Panc1 (cell line): ENCODE measurements at regions of chr7 and their contacts with region 1.

Region 1: DNA sequence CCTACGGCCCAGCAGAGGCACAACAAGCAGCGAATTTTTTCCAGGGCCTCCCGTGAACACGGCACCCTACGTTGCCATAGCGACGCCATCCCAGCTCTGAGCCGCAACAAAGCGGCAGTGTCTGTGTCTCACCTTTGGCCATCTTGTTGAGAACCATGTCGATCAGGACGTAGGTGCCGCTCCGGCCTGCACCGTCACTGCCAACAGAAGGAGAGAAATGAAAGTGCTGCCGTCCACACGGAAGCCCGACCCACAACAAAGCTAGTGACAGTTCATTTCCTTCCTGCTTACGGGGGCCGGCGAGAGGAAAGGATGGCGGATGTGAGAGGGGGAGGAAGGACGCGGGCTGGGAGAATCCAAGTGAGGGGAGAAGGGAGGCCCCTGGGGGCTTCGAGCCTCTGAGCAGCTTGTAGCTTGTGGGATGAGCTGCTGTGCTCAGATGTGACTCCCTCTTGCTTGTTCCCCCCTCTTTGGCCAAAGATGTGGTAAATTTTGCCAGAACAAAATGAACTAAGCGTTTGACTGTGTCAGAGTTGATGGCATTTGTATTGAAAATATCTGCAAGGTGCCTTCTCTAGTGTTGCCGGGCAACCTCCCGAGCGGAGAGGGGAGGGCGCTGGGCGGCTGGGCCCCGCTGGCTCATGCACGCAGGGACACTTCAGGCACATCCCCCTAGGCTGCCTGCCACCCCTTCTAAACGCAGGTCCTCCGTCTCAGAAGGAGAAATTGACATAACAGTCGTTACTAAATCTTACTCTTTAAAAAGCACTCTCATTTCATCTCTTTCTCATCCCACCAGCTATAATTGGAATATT is 232.2 kb downstream of the DNAJB6 start:
- DNase-seq: no peak
- ATAC-seq: no peak
- H3K4me3 ChIP-seq: no peak overlapping the region; a peak in 1 of 4 replicates
- H3K27ac ChIP-seq: no peak overlapping the region
- H3K4me1 ChIP-seq: no peaks in the 10 kb centered on the region
- H3K27me3 ChIP-seq: no peaks in the 10 kb centered on the region
- CTCF ChIP-seq: no peak

Region 2: GRCh38 chr7:157555313-157555712 is 13.7 kb before region 1 on chr7:
- CTCF ChIA-PET with region 1: no interaction called
- POLR2A ChIA-PET with region 1: no interaction called
- in situ Hi-C with region 1: no loop called
- intact Hi-C with region 1: no loop called
- DNase-seq: no peak
- ATAC-seq: no peak
- H3K4me3 ChIP-seq: no peak overlapping the region
- H3K27ac ChIP-seq: no peak overlapping the region
- H3K4me1 ChIP-seq: no peaks in the 10 kb centered on the region
- H3K27me3 ChIP-seq: no peaks in the 10 kb centered on the region
- CTCF ChIP-seq: no peak

Region 3: DNA sequence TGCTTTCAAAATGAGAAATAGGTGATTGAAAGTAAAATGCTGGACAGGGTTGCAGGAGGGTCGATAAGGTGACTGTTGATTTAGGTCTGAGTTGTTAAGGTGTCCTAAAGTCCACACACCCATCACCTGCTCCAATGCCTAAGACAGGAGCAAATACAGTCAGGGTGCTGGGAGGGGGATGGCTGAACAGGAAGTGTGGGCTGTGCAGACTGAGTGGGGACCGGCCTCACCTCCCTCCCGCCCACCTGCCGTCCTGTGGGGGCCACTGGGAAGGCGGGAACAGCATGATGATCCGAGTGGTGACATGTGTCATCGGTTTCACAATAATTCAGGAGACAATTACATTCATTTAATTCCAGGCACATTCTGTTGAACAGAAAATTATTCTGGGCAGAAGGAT is 28.6 kb after region 1 on chr7:
- CTCF ChIA-PET with region 1: no interaction called
- POLR2A ChIA-PET with region 1: no interaction called
- in situ Hi-C with region 1: no loop called
- intact Hi-C with region 1: no loop called
- DNase-seq: no peak
- ATAC-seq: no peak
- H3K4me3 ChIP-seq: no peak overlapping the region
- H3K27ac ChIP-seq: no peak overlapping the region
- H3K4me1 ChIP-seq: no peaks in the 10 kb centered on the region
- H3K27me3 ChIP-seq: no peaks in the 10 kb centered on the region
- CTCF ChIP-seq: no peak

Region 4: GRCh38 chr7:157609932-157610640 is 41.1 kb after region 1 on chr7:
- CTCF ChIA-PET with region 1: no interaction called
- POLR2A ChIA-PET with region 1: no interaction called
- in situ Hi-C with region 1: no loop called
- intact Hi-C with region 1: loop called (anchors 2 kb)
- DNase-seq: no peak
- ATAC-seq: no peak
- H3K4me3 ChIP-seq: no peak overlapping the region
- H3K27ac ChIP-seq: no peak overlapping the region
- H3K4me1 ChIP-seq: no peaks in the 10 kb centered on the region
- H3K27me3 ChIP-seq: no peaks in the 10 kb centered on the region
- CTCF ChIP-seq: no peak

Region 5: GRCh38 chr7:157662981-157663716 is 94.2 kb after region 1 on chr7:
- CTCF ChIA-PET with region 1: no interaction called
- POLR2A ChIA-PET with region 1: no interaction called
- in situ Hi-C with region 1: no loop called
- intact Hi-C with region 1: no loop called
- DNase-seq: no peak
- ATAC-seq: no peak
- H3K4me3 ChIP-seq: no peak overlapping the region
- H3K27ac ChIP-seq: no peak overlapping the region
- H3K4me1 ChIP-seq: peaks cover 4% of the 10 kb centered on the region; the same call in 1 of the 2 replicates
- H3K27me3 ChIP-seq: no peaks in the 10 kb centered on the region
- CTCF ChIP-seq: no peak